AG04449 (cell line): ENCODE measurements at regions of chr2 and their contacts with region 1.

Region 1: DNA sequence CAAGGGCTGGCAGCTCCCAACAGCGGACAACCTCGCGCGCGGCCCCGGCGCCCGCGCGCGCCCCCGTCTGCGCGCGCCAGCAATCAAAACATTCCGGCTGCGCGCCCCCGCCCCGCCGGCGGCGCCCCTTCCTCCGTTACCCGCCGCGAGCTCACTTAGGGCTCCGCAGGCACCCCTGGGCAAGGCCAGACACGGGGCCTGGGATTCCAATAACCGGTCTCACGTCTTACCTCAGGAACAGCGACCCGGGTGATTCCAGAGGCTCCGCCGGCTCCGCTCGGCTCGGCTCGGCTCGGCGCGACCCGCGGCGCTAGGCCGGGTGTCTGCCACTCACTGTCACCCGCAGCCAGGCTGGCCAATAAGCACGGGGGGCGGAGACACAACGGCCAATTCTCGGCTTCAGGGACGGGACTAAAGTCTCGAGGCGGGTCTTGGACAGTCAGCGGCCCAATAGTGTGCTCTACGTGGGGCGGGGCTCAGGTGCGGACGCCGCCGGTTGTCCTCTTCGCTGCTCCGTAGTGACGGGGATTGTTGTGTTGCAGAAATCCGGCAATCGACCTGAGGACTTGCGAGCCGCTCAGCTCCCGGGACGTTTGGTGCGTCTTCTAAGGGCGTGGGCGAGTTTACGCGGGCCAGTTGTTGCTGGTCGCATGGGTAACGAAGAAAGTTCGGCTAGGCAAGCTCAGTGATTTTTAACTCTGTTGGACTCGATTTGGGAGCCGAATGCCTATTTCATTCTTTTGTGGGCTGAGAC is at the starts of genes ANKZF1 and ATG9A:
- DNase-seq: peak; percentile 86
- H3K4me3 ChIP-seq: peak within 1 kb of the TSS; percentile 92
- CTCF ChIP-seq: no peak

Region 2: GRCh38 chr2:219041252-219041651 is 188.2 kb before region 1 on chr2 and contains the start of gene CFAP65:
- CTCF ChIA-PET with region 1: no interaction called
- POLR2A ChIA-PET with region 1: no interaction called
- DNase-seq: no peak
- H3K4me3 ChIP-seq: peak within 1 kb of the TSS; percentile 56
- CTCF ChIP-seq: no peak

Region 3: DNA sequence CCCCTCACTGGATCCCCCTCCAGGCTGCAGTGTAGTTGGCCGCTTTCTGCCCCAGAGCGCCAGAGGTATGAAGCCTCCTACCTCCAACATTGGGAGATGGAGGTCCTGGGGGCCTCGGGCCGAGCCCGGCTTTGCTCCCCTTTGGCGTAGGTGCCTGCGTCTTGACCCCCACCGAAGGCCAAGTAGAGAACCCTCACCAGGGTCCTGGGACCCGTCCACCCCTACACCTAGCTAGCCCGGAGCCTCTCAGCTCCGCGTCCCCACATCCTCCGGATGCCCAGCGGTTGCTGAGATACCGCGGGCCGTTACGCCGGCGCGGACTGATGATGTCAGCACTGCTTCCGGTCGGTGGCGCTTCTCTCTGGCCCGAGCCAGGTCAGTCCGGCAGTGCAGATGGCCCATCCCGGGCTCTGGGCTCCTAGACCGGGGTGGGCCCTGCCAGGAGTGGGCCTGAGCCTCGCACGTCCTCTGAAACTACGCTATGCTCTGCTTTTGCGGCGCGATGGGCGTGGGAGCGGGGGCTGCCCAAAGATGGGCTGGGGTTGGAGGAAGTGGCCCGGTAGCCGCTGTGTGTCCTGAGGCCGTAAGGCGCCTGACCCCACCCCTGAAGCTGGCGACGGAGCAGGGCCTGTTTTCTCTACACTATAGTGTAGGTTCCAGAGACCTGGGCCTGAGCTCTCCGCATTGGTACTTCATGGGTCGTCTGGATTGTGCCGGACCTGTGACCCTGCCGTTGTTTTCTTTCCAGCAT is 15.8 kb after region 1 on chr2 and contains the starts of genes GLB1L and STK16:
- CTCF ChIA-PET with region 1: interaction called, 5 read pairs
- POLR2A ChIA-PET with region 1: interaction called, 13 read pairs
- DNase-seq: peak; percentile 57
- H3K4me3 ChIP-seq: peak within 1 kb of the TSS; percentile 98
- CTCF ChIP-seq: no peak

Region 4: DNA sequence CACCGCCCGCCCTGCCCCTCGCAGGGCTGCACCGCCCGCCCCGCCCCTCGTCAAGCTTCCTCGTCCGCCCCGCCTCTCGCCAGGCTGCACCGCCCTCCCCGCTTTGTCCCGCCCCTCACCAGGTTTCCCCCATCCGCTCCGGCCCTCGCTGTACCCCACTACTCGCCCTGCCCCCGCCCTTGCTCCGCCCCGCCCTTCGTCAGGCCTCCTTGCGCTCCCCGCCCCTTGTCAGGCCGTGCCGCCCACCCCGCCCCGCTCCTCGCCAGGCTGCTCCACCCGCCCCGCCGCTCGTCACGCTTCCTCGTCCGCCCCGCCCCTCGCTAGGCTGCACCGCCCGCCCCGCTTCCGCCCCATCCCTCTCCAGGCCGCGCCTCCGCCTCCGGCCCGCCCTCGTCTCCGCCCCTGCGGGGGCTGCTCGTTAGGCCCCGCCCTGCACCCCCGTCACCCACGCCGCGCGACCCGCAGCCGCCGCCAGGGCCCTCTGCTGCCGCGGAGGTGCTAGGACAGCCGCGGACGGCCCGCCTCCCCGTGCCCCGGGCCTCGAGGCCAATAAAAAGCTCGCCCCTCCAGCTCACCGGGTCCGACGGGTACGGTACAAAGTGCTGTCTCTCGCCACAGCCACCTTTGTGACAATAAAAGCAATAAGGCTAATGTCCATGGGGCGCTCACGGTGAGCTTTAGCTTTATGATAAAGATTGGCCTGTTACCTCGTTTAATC is 158.8 kb after region 1 on chr2:
- CTCF ChIA-PET with region 1: no interaction called
- POLR2A ChIA-PET with region 1: no interaction called
- DNase-seq: peak; percentile 73
- H3K4me3 ChIP-seq: peak overlapping the region; percentile 56
- CTCF ChIP-seq: peak; percentile 60

Region 5: GRCh38 chr2:219597552-219598307 is 368.2 kb after region 1 on chr2 and contains the start of gene STK11IP:
- CTCF ChIA-PET with region 1: no interaction called
- POLR2A ChIA-PET with region 1: no interaction called
- DNase-seq: peak; percentile 70
- H3K4me3 ChIP-seq: peak within 1 kb of the TSS; percentile 84
- CTCF ChIP-seq: no peak